Motor neuron (in vitro differentiated cells): ENCODE measurements at regions of chr12 and their contacts with region 1.

Region 1: DNA sequence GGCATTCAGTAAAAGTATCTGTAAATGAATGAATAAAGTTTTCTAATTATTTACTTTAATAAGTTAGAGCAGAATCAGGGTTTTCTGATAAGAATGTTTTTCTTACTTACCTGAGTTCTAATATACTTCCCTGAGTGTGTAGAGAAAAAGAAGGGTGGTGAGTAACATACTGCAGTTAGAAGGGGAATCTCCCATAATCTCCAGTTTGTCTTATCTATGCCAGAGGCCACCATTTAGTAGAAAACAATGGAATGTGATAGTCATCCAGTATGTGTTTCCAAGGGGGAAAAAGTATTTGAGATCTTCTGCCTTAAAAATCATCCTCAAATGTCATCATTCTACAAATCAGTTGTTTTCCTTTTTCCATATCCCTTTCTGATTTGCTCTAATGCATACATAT is 56.5 kb upstream of the PAWR start:
- ATAC-seq: no peak
- H3K4me3 ChIP-seq: no peak overlapping the region
- H3K27ac ChIP-seq: no peak overlapping the region
- H3K4me1 ChIP-seq: no peaks in the 10 kb centered on the region

Region 2: DNA sequence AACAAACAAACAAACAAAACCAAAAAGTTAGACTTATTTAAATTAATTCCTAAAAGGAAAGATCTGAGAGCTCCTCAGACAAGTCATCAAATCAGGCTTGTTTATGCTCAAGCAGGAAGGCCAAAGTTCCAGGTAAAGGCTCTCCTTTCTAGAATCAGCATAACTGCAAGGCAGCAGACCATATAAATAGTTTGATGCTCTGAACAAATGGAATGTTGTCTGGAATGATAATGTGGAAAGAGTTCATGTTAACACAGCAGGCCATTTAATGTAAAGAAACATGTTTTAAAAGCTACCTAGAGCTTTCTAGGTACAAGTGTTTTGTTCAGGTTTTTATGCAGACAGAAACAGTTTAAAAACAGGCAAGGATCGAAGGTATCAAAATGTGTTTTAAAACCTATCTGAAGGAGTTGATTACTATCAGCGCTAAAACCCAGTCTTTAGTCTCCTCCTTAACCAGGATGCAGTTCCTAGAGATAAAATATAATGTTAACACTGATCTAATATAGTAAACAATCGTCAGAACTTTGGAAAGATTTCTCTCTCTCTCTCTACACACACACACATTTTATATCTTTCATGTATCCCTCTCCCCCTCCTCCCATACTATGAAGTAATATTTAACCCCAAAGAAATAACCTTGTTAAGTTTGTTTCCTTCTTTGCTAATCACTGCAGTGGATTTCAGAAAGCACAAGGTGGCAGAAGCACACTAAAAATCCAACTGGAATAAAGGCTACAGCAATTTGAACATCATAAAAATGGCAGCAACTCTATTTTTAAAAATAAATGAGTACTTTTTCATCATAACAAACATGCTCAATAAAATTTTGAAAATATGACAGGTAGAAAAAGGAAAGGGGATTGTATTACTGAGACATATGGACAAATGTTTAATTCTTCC is 192.0 kb before region 1 on chr12:
- in situ Hi-C with region 1: loop called in 2 of 9 experiments (anchors 10 kb)
- ATAC-seq: peak in 4 of 8 experiments; percentile 22 to 62 (median 56)
- H3K4me3 ChIP-seq: no peak overlapping the region
- H3K27ac ChIP-seq: no peak overlapping the region
- H3K4me1 ChIP-seq: peaks cover 0 to 3% of the 10 kb centered on the region in 2 donors